H1 (cell line): ENCODE measurements at regions of chr9 and their contacts with region 1.

Region 1: GRCh38 chr9:126661521-126662220 is 47.9 kb downstream of the LMX1B start:
- DNase-seq: peak; percentile 84 to 90
- H3K4me3 ChIP-seq: no peak overlapping the region; a peak in 1 of 8 replicates
- H3K27ac ChIP-seq: no peak overlapping the region
- H3K4me1 ChIP-seq: peaks cover 11 to 41% (median 30%) of the 10 kb centered on the region in 4 experiments
- H3K27me3 ChIP-seq: peaks cover 0 to 6% (median 2%) of the 10 kb centered on the region in 4 experiments; a peak in 3 of 7 replicates
- CTCF ChIP-seq: peak in 2 of 3 experiments; percentile 62 to 81; a peak in 3 of 4 replicates
- EP300 ChIP-seq: no peak
- POLR2A ChIP-seq: no peak
- RAD21 ChIP-seq: peak; percentile 62 to 75

Region 2: DNA sequence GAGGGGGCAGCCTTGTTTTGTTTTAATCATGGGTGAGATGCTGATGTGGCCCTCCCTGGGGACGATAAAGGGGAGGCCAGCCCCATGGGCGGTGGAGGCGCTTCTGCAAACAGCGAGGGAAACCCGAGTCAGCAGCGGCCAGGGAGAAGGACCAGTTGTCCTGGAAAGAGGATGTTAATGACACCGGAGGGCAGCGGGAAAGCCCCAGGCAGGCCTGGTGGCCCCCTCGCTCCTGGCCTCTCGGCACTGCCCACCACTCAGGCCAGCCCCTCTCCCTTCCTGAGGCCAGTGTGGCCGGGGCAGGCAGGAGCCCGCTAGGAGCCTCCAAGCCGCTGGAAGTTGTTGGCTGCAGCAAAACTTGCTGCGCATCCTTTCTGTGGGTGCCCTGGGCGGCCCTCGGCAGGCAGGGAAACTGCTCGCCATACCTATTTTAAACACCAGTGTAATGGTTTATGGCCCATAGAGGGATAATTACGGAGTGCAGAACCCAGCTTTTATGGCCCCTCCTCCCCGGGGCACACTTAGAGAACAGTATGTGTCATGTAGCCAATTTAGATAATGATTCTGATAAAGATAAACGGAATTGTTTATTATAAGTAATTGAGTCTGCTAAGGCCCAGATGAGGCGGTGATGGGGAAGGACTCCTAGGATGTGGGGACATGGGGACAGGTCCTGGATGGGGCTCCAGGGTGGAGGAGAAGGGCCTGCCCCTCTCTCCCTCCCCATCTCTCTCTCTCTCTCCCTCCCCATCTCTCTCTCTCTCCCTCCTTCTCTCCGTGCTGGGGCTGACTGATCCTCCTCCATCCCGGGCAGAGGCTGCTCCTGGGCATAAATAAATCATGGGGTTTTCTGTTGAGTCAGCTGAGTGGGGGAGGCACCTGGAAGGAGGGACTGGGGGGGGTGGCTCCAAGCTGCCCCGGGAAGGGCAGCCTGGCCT is 11.0 kb before region 1 on chr9:
- CTCF ChIA-PET with region 1: interaction called, 24 read pairs
- POLR2A ChIA-PET with region 1: interaction called, 6 read pairs
- DNase-seq: no peak
- H3K4me3 ChIP-seq: no peak overlapping the region
- H3K27ac ChIP-seq: no peak overlapping the region
- H3K4me1 ChIP-seq: peaks cover 3 to 22% (median 11%) of the 10 kb centered on the region in 4 experiments
- H3K27me3 ChIP-seq: peaks cover 0 to 9% (median 0%) of the 10 kb centered on the region in 4 experiments; a peak in 3 of 7 replicates
- CTCF ChIP-seq: no peak
- EP300 ChIP-seq: no peak
- POLR2A ChIP-seq: no peak
- RAD21 ChIP-seq: no peak

Region 3: GRCh38 chr9:126673689-126674364 is 12.2 kb after region 1 on chr9:
- CTCF ChIA-PET with region 1: interaction called, 36 read pairs
- POLR2A ChIA-PET with region 1: interaction called, 26 read pairs
- DNase-seq: no peak
- H3K4me3 ChIP-seq: peak overlapping the region in 1 of 4 experiments; percentile 10; a peak in 1 of 8 replicates
- H3K27ac ChIP-seq: no peak overlapping the region
- H3K4me1 ChIP-seq: peaks cover 17 to 66% (median 55%) of the 10 kb centered on the region in 4 experiments
- H3K27me3 ChIP-seq: peaks cover 0 to 27% (median 17%) of the 10 kb centered on the region in 4 experiments; a peak in 6 of 7 replicates
- CTCF ChIP-seq: no peak
- EP300 ChIP-seq: no peak
- POLR2A ChIP-seq: no peak
- RAD21 ChIP-seq: no peak

Region 4: DNA sequence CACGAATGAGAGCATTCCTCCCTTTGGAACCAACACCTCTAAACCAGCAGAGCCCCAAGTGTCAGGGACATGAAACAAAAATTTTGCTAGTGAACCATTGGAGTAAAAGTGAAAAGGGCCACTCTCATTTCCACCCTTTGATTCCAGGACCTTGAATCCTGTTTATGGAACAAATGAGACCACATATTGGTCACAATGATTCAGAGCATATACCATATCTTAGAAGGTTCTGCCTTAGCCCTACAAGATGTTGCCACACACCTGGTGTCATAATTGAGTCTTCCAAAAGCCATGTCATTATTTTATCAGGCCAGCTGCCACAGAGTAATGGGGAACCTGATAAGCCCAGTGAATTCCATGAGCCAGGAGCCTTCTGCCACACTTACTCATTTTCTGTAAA is 76.9 kb after region 1 on chr9:
- CTCF ChIA-PET with region 1: no interaction called
- POLR2A ChIA-PET with region 1: no interaction called
- DNase-seq: peak in 1 of 2 experiments; percentile 10
- H3K4me3 ChIP-seq: no peak overlapping the region
- H3K27ac ChIP-seq: no peak overlapping the region
- H3K4me1 ChIP-seq: no peaks in the 10 kb centered on the region
- H3K27me3 ChIP-seq: no peaks in the 10 kb centered on the region; a peak in 2 of 7 replicates
- CTCF ChIP-seq: no peak
- EP300 ChIP-seq: no peak
- POLR2A ChIP-seq: no peak
- RAD21 ChIP-seq: no peak